ENCODE measurements at regions of chr7 and their contacts with region 1.

Region 1: GRCh38 chr7:3300651-3301378 is at the start of gene SDK1:
- DNase-seq: peak; percentile 40 to 93
- H3K4me3 ChIP-seq: peak within 1 kb of the TSS; percentile 53; the same call in 1 of the 2 replicates
- H3K27ac ChIP-seq: no peak within 1 kb of the TSS
- H3K4me1 ChIP-seq: no peaks in the 10 kb centered on the region
- H3K27me3 ChIP-seq: no peaks in the 10 kb centered on the region
- CTCF ChIP-seq: peak; percentile 68; the same call in 1 of the 2 replicates
- total RNA-seq, gene SDK1: not detected in 2 replicates

Region 2: DNA sequence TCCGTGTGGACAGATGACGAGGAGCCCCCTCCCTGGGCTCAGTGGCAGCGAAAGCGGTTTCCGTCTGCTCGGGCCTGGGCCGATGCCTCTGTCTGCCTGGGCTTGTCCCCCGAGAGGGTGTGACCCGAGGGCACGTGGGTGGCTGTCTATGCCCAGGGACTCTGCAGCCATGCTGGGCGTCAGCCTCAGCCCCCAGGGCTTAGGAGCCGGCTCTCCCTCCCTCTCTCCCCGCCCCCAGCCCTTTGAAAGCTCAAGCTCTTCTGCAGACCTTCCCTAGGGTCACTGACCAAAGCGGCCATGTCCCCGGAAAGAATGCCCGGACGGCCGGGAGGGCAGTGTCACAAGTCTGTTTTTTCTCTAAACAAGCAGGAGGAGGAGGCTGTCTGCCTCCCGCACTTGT is 1848.6 kb before region 1 on chr7:
- CTCF ChIA-PET with region 1: no interaction called
- POLR2A ChIA-PET with region 1: interaction called, 24 read pairs
- intact Hi-C with region 1: no loop called
- DNase-seq: no peak
- H3K4me3 ChIP-seq: no peak overlapping the region
- H3K27ac ChIP-seq: no peak overlapping the region
- H3K4me1 ChIP-seq: peaks cover 20% of the 10 kb centered on the region
- H3K27me3 ChIP-seq: no peaks in the 10 kb centered on the region
- CTCF ChIP-seq: no peak

Region 3: GRCh38 chr7:2886900-2887299 is 413.9 kb before region 1 on chr7:
- CTCF ChIA-PET with region 1: interaction called, 3 read pairs
- POLR2A ChIA-PET with region 1: no interaction called
- intact Hi-C with region 1: loop called (anchors 5 kb)
- DNase-seq: peak; percentile 55 to 61
- H3K4me3 ChIP-seq: no peak overlapping the region
- H3K27ac ChIP-seq: no peak overlapping the region
- H3K4me1 ChIP-seq: no peaks in the 10 kb centered on the region
- H3K27me3 ChIP-seq: no peaks in the 10 kb centered on the region
- CTCF ChIP-seq: peak; percentile 92

Region 4: GRCh38 chr7:3089493-3089892 is 211.3 kb before region 1 on chr7:
- CTCF ChIA-PET with region 1: no interaction called
- POLR2A ChIA-PET with region 1: no interaction called
- intact Hi-C with region 1: loop called (anchors 10 kb)
- DNase-seq: peak in 1 of 2 experiments; percentile 26
- H3K4me3 ChIP-seq: no peak overlapping the region
- H3K27ac ChIP-seq: no peak overlapping the region
- H3K4me1 ChIP-seq: no peaks in the 10 kb centered on the region
- H3K27me3 ChIP-seq: no peaks in the 10 kb centered on the region
- CTCF ChIP-seq: peak; percentile 79

Region 5: DNA sequence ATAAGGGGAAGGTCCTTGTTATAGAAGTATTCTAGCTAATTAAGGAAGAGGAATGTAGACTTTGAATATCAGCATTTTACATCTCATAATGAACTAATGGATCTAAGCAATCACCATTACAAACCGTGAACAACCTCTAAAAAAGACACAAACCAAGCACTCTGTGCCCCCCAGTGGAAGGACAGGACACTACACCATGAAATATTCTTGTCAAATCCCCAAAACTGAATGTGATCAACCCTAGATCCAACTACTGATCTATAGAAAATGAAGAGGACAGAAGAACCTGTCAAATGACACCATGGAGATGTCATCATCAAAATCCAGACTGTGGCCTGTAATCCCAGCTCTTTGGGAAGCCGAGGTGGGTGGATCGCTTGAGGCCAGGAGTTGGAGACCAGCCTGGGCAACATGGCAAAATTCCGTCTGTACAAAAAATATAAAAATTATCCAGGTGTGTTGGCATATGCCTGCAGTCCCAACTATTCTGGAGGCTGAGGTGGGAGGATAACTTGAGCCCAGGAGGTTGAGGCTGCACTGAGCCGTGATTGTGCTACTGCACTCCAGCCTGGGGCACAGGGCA is 145.8 kb before region 1 on chr7:
- CTCF ChIA-PET with region 1: interaction called, 3 read pairs
- POLR2A ChIA-PET with region 1: no interaction called
- intact Hi-C with region 1: loop called (anchors 5 kb)
- DNase-seq: peak; percentile 31 to 60
- H3K4me3 ChIP-seq: no peak overlapping the region
- H3K27ac ChIP-seq: no peak overlapping the region
- H3K4me1 ChIP-seq: peaks cover 14% of the 10 kb centered on the region
- H3K27me3 ChIP-seq: no peaks in the 10 kb centered on the region
- CTCF ChIP-seq: peak; percentile 95

Region 6: GRCh38 chr7:3194501-3195141 is 106.2 kb before region 1 on chr7:
- CTCF ChIA-PET with region 1: no interaction called
- POLR2A ChIA-PET with region 1: no interaction called
- intact Hi-C with region 1: loop called (anchors 10 kb)
- DNase-seq: peak; percentile 87 to 98
- H3K4me3 ChIP-seq: peak overlapping the region; percentile 3; the same call in 1 of the 2 replicates
- H3K27ac ChIP-seq: peak overlapping the region; percentile 83
- H3K4me1 ChIP-seq: peaks cover 35% of the 10 kb centered on the region
- H3K27me3 ChIP-seq: no peaks in the 10 kb centered on the region
- CTCF ChIP-seq: peak; percentile 69

Region 7: DNA sequence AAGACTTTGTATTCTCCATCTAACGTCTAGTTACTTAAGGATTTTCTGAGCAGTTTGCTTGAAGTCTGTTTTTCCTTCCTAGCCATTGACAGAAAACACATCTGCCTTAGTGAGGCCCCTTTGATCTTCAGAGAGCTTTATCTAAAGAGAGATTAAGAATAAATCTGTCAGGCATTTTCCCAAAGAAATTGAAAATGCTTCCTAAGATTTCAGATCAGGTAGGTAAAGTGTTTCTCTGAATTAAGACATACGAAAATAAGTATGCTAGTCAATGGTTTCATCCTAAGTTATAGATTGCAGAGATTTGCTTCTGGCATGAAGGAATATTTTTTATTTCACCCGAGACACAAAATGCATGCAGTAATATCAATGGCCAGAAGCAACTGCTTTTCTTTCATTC is 168.8 kb after region 1 on chr7:
- CTCF ChIA-PET with region 1: no interaction called
- POLR2A ChIA-PET with region 1: no interaction called
- intact Hi-C with region 1: no loop called
- DNase-seq: no peak
- H3K4me3 ChIP-seq: no peak overlapping the region
- H3K27ac ChIP-seq: no peak overlapping the region
- H3K4me1 ChIP-seq: no peaks in the 10 kb centered on the region
- H3K27me3 ChIP-seq: peaks cover 53% of the 10 kb centered on the region
- CTCF ChIP-seq: no peak